ENCODE measurements at regions of chr6 and their contacts with region 1.

Region 1: GRCh38 chr6:137697267-137697938 is 169.7 kb upstream of the TNFAIP3 start:
- DNase-seq: no peak
- ATAC-seq: peak; percentile 80
- H3K4me3 ChIP-seq: no peak overlapping the region
- H3K27ac ChIP-seq: no peak overlapping the region
- H3K4me1 ChIP-seq: peaks cover 13% of the 10 kb centered on the region
- H3K27me3 ChIP-seq: no peaks in the 10 kb centered on the region
- CTCF ChIP-seq: peak; percentile 14 to 35 (median 27); a peak in 5 of 6 replicates
- EP300 ChIP-seq: no peak
- POLR2A ChIP-seq: no peak
- RAD21 ChIP-seq: peak; percentile 58

Region 2: GRCh38 chr6:137652966-137653705 is 44.3 kb before region 1 on chr6:
- CTCF ChIA-PET with region 1: interaction called, 97 read pairs
- POLR2A ChIA-PET with region 1: interaction called, 6 read pairs
- RAD21 ChIA-PET with region 1: interaction called, 34 read pairs
- SMC1A ChIA-PET with region 1: interaction called, 236 read pairs
- in situ Hi-C with region 1: no loop called
- intact Hi-C with region 1: no loop called
- DNase-seq: no peak
- ATAC-seq: no peak
- H3K4me3 ChIP-seq: no peak overlapping the region
- H3K27ac ChIP-seq: no peak overlapping the region
- H3K4me1 ChIP-seq: peaks cover 1% of the 10 kb centered on the region; the same call in 1 of the 2 replicates
- H3K27me3 ChIP-seq: no peaks in the 10 kb centered on the region
- CTCF ChIP-seq: no peak
- EP300 ChIP-seq: no peak
- POLR2A ChIP-seq: no peak
- RAD21 ChIP-seq: no peak

Region 3: DNA sequence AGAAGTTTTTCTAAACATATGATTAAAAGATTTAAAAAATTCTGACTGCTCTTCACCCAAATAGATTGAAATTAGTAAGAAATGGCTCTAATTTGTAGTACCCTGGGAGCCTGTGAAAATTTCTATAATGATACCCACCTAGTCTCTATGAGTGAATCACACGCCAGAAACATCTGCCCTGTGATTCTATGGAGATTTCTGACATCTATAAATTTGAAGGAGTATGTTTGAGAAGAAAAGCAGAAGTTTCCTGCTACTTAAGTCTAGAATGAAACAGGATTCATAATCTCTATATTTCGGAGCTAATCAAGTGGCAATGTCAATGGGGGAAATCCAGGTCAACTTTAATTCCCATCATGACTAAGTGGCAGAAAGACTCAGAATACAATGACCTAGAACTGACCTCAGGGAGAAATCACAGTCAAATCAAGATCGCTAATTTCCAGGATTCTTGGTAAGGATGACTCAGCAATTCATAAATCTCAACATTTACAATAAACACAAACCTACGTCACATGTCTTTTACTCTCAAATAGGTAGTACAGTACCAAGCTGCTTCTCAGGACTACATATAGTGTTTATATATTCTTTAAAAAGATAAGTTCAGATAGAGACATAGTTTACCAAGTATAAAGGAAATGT is 16.6 kb before region 1 on chr6:
- CTCF ChIA-PET with region 1: interaction called, 17 read pairs
- POLR2A ChIA-PET with region 1: interaction called, 4 read pairs
- RAD21 ChIA-PET with region 1: interaction called, 6 read pairs
- SMC1A ChIA-PET with region 1: interaction called, 67 read pairs
- in situ Hi-C with region 1: no loop called
- intact Hi-C with region 1: no loop called
- DNase-seq: no peak
- ATAC-seq: peak; percentile 53
- H3K4me3 ChIP-seq: no peak overlapping the region
- H3K27ac ChIP-seq: no peak overlapping the region; the same call in 1 of the 2 replicates
- H3K4me1 ChIP-seq: peaks cover 27% of the 10 kb centered on the region
- H3K27me3 ChIP-seq: no peaks in the 10 kb centered on the region
- CTCF ChIP-seq: no peak
- EP300 ChIP-seq: no peak; a peak in 1 of 4 replicates
- POLR2A ChIP-seq: no peak
- RAD21 ChIP-seq: no peak

Measured in GM12878 (cell line).